Calu3 (cell line): ENCODE measurements at regions of chr7 and their contacts with region 1.

Region 1: GRCh38 chr7:97499204-97499603 is 232.7 kb upstream of the TAC1 start:
- DNase-seq: peak; percentile 49
- H3K4me3 Mint-ChIP-seq: no peak overlapping the region
- H3K27ac Mint-ChIP-seq: no peak overlapping the region
- H3K4me1 Mint-ChIP-seq: no peaks in the 10 kb centered on the region
- H3K27me3 Mint-ChIP-seq: peaks cover 14% of the 10 kb centered on the region
- CTCF ChIP-seq: peak; percentile 35

Region 2: DNA sequence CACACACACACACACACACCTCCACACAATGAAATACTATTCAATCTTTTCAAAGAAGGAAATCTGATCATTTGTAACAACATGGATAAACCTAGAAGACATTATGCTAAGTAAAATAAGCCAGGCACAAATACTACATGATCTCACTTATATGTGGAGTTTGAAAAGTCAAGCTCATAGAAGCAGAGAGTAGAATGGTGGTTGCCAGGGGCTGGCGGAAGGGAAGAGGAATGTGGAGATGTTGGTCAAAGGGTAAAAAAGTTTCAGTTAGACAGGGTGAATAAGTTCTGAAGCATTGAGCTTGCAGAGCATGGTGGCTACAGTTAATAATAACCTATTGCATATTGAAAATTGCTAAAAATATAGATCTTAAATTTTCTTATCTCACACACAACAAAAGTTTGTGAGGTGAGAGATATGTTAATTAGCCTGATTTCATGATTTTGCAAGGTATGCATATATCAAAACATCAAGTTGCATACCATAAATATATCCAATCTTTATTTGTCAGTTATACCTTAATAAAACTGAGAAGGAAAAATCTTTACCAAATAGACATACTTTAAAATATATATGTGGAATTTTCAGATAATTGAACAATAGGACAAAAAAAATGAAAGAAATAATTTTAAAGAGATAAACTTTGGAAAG is 249.2 kb after region 1 on chr7:
- CTCF ChIA-PET with region 1: no interaction called
- intact Hi-C with region 1: loop called (anchors 10 kb)
- DNase-seq: no peak
- H3K4me3 Mint-ChIP-seq: no peak overlapping the region
- H3K27ac Mint-ChIP-seq: no peak overlapping the region
- H3K4me1 Mint-ChIP-seq: no peaks in the 10 kb centered on the region
- H3K27me3 Mint-ChIP-seq: no peaks in the 10 kb centered on the region
- CTCF ChIP-seq: no peak

Region 3: GRCh38 chr7:97819161-97819560 is 320.0 kb after region 1 on chr7:
- CTCF ChIA-PET with region 1: interaction called, 10 read pairs
- intact Hi-C with region 1: loop called (anchors 1 kb)
- DNase-seq: no peak
- H3K4me3 Mint-ChIP-seq: no peak overlapping the region
- H3K27ac Mint-ChIP-seq: no peak overlapping the region
- H3K4me1 Mint-ChIP-seq: no peaks in the 10 kb centered on the region
- H3K27me3 Mint-ChIP-seq: no peaks in the 10 kb centered on the region
- CTCF ChIP-seq: no peak

Region 4: DNA sequence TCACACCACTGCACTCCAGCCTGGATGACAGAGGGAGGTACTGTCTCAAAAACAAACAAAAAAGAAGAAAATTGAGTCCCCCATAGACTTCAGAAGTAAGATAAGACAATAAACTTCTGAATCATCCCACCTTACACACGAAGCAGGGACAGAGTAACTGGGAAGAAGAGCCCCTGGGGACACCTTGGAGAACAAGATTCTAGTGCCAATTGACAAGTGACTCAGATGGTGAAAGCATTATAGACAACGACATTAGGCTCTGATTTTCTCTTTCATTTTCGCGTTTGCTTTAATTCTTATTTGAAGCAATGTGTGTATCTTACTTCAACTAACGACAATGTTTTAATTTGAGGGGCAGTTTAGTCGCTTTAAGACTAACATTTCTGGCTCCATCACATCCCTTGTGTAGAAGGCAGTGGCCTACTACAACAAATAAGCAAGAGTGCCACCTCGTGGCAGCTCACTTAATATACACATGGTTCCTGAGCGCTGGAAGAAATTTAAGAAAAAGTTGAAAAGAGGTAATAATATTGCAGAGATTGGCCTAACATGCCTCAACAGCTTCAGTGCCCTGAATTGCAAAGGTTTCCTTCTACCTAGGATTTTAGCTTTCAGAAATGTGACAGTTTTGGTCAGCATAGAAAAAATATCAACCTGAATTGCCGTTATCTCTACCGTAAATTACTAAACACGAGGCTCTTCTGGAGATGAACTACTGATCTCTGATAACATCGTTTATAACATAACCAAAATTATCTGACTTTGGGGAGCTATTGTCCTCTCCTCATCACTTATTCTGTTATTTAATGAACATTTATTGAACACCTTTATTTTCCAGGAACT is 336.3 kb after region 1 on chr7:
- CTCF ChIA-PET with region 1: interaction called, 6 read pairs
- intact Hi-C with region 1: loop called (anchors 1 kb)
- DNase-seq: peak; percentile 62
- H3K4me3 Mint-ChIP-seq: no peak overlapping the region
- H3K27ac Mint-ChIP-seq: no peak overlapping the region
- H3K4me1 Mint-ChIP-seq: no peaks in the 10 kb centered on the region
- H3K27me3 Mint-ChIP-seq: peaks cover 45% of the 10 kb centered on the region
- CTCF ChIP-seq: peak; percentile 32